ENCODE measurements at regions of chr10 and their contacts with region 1.

Region 1: GRCh38 chr10:122879339-122880273 is at the start of gene FAM24B:
- DNase-seq: peak; percentile 90 to 96 (median 96)
- H3K4me3 ChIP-seq: peak within 1 kb of the TSS; percentile 47 to 79
- H3K4me3 Mint-ChIP-seq: peak within 1 kb of the TSS; percentile 91 to 95 (median 92)
- H3K27ac ChIP-seq: peak within 1 kb of the TSS; percentile 68
- H3K27ac Mint-ChIP-seq: peak within 1 kb of the TSS; percentile 79 to 97 (median 95)
- H3K4me1 ChIP-seq: peaks cover 41% of the 10 kb centered on the region
- H3K4me1 Mint-ChIP-seq: peaks cover 31 to 55% (median 43%) of the 10 kb centered on the region in 4 donors
- H3K27me3 ChIP-seq: no peaks in the 10 kb centered on the region
- H3K27me3 Mint-ChIP-seq: no peaks in the 10 kb centered on the region
- total RNA-seq, gene FAM24B: 10.8 to 12.8 TPM

Region 2: DNA sequence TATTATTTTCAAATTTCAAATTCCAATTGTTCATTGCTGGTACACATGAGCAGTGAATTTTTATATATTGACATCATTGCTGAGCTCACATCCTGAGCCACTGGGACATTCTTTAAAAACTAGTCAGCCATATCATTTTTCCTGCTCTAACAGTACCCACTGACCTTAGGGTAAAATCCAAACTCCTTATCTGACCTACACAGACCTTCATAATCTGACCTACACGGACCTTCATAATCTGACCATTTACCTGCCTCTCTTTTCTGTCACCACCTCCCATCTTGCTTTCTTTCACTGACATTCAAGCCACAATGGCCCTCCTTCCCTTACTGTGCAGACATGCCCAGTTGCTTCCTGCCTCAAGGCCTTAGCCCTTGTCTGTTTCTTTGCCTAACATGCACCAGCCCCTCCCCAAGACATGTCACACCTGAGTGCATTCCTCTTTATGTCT is 17.9 kb before region 1 on chr10:
- CTCF ChIA-PET with region 1: no interaction called
- POLR2A ChIA-PET with region 1: no interaction called
- intact Hi-C with region 1: no loop called
- DNase-seq: no peak
- H3K4me3 ChIP-seq: no peak overlapping the region
- H3K4me3 Mint-ChIP-seq: no peak overlapping the region
- H3K27ac ChIP-seq: no peak overlapping the region
- H3K27ac Mint-ChIP-seq: no peak overlapping the region
- H3K4me1 ChIP-seq: no peaks in the 10 kb centered on the region
- H3K4me1 Mint-ChIP-seq: peaks cover 7 to 22% (median 16%) of the 10 kb centered on the region in 4 donors
- H3K27me3 ChIP-seq: no peaks in the 10 kb centered on the region
- H3K27me3 Mint-ChIP-seq: no peaks in the 10 kb centered on the region

Region 3: DNA sequence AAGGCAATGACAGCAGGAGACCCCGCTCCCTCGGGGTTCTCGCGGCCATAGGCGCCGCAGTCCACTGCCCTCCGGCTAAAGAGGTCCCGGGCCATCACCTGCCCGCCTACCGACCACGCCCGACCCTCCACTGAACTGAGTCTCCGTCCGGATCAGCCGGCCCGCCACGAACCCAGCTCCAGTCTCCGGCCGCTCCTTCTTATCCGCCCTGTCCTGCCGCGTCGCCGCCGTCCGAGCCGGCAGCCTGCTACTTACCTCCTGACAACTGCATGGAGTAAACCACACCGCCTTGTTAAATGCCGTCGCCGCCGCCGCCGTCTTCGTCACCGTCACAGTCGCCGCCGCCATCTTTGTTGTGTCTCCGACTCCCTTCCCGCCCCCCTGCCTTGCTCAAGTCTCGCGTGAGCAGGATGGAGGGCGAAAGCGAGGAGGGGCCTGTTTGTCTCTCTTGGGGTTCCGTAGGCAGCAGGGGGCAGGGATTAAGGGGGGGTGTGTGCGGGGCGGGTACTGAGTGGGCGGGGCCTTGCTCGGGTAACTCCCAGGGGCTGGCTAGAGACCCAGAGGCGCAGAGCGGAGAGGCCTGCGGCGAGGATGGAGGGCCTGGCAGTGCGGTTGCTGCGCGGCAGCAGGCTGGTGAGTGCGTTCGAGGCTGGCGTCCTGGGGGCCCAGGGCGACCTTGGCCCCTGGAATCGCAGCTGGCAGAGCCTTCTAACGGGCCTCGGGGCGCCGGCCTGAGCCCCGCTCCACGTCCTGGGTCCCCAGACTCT is 129.0 kb after region 1 on chr10 and contains the starts of genes ACADSB and IKZF5:
- CTCF ChIA-PET with region 1: no interaction called
- POLR2A ChIA-PET with region 1: interaction called, 3 read pairs
- intact Hi-C with region 1: loop called (anchors 1 kb)
- DNase-seq: peak; percentile 95 to 99 (median 97)
- H3K4me3 ChIP-seq: peak within 1 kb of the TSS; percentile 68 to 87
- H3K4me3 Mint-ChIP-seq: peak within 1 kb of the TSS; percentile 96 to 100 (median 99)
- H3K27ac ChIP-seq: peak within 1 kb of the TSS; percentile 91
- H3K27ac Mint-ChIP-seq: peak within 1 kb of the TSS; percentile 92 to 100 (median 99)
- H3K4me1 ChIP-seq: peaks cover 57% of the 10 kb centered on the region
- H3K4me1 Mint-ChIP-seq: peaks cover 41 to 72% (median 55%) of the 10 kb centered on the region in 4 donors
- H3K27me3 ChIP-seq: no peaks in the 10 kb centered on the region
- H3K27me3 Mint-ChIP-seq: no peaks in the 10 kb centered on the region
- total RNA-seq, gene ACADSB: 35.7 to 36.4 TPM
- total RNA-seq, gene IKZF5: 37.4 to 45.9 TPM

Measured in CD4-positive, alpha-beta memory T cell (primary cell).